CD8-positive, alpha-beta T cell (primary cell): ENCODE measurements at regions of chr14 and their contacts with region 1.

Region 1: DNA sequence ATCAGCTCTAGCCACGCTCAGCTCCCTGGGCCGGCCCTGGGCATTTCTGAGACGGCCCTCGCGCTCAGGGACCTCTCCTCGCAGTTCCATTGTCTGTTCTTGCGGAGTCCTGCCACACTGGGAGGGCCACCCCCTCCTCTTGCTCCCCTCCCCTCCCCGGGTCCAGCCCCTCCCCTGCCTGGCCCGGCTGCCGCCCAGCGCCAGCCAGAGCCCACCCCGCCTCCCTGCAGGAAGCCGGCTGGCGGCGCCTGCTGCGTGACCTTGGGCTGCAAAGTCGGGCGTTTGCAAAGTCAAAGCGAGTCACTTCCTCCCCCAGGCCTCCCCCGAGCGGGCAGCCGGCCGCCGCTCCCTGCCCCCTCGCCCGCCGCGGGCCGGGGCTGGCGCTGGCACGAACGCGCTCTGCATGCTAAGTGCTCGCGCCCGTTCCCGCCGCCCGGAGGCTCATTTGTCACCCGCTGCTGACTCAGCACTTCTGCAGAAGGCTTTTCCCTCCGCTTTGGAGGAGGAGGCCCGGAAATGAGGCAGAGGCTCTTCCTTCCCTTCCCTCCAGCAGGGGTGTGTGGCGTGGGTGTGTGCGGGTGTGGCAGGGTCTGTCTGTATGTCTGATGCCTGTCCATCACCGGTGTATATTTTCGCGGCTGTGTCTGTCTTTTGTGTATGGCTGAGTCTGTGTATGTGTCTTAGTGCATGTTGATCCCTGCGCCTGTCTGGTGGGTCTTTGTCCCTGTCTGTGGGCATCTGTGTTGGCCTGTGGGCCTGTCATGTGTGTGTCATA is 72.0 kb downstream of the IRF2BPL start:
- DNase-seq: peak; percentile 70 to 95 (median 85)
- ATAC-seq: peak; percentile 63
- H3K4me3 ChIP-seq: peak overlapping the region; percentile 62 to 74
- H3K4me3 Mint-ChIP-seq: peak overlapping the region; percentile 84
- H3K27ac ChIP-seq: peak overlapping the region; percentile 93 to 95
- H3K27ac Mint-ChIP-seq: peak overlapping the region; percentile 97
- H3K4me1 ChIP-seq: peaks cover 52% of the 10 kb centered on the region
- H3K4me1 Mint-ChIP-seq: peaks cover 61% of the 10 kb centered on the region
- H3K27me3 ChIP-seq: no peaks in the 10 kb centered on the region
- H3K27me3 Mint-ChIP-seq: no peaks in the 10 kb centered on the region
- CTCF ChIP-seq: no peak

Region 2: GRCh38 chr14:75549169-75549568 is 1407.3 kb before region 1 on chr14:
- CTCF ChIA-PET with region 1: no interaction called
- POLR2A ChIA-PET with region 1: no interaction called
- intact Hi-C with region 1: no loop called
- DNase-seq: peak in 1 of 9 experiments; percentile 28
- ATAC-seq: no peak
- H3K4me3 ChIP-seq: no peak overlapping the region
- H3K4me3 Mint-ChIP-seq: no peak overlapping the region
- H3K27ac ChIP-seq: peak overlapping the region in 1 of 2 experiments; percentile 46
- H3K27ac Mint-ChIP-seq: peak overlapping the region; percentile 27
- H3K4me1 ChIP-seq: peaks cover 6% of the 10 kb centered on the region
- H3K4me1 Mint-ChIP-seq: peaks cover 21% of the 10 kb centered on the region
- H3K27me3 ChIP-seq: no peaks in the 10 kb centered on the region
- H3K27me3 Mint-ChIP-seq: no peaks in the 10 kb centered on the region
- CTCF ChIP-seq: no peak

Region 3: DNA sequence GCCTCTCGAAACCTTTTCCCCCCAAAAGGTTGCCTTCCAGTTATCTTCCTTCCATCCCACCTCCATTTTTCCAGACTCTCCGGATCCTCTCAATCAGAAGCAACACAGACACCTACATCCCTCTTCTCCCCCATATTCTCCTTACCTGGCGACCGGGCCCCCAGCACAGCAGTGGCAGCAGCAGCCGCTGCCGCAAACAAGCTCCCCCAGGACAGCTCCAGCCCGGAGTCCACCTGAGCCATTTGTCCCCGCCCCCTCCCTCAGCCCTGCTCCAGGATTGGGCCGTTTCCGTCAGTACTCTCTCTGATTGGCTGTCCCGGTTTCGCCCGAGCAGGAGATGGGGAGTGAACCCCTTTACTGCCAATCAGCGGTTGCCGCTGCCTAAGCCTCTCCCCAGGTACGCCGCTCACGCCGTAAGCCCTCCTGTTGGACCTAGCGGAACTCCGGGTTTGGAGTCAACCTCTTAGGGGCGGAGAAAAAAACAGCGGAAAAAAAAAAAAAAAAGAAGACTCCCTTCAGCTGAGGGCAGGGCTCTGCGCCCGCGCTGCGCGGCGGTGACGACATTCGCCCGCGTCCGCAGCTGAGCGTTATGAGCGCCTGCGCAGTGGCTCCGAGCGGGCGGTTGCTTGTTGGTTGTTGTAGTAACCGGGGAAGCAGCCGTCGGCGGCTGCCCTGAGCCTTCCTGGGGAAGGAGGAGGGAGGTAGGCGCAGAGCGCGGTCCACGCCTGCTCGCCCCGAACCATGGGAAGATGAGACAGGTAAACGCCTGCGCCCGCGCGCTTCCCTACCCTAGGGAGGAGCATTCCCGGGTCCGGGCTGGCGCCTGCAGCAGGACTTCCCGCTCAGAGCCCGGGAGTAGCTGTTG is 1295.6 kb before region 1 on chr14 and contains the starts of genes ERG28 and TTLL5:
- CTCF ChIA-PET with region 1: no interaction called
- POLR2A ChIA-PET with region 1: no interaction called
- intact Hi-C with region 1: loop called in 1 of 2 experiments (anchors 5 kb)
- DNase-seq: peak; percentile 94 to 99 (median 95)
- ATAC-seq: peak; percentile 93
- H3K4me3 ChIP-seq: peak within 1 kb of the TSS; percentile 86 to 87
- H3K4me3 Mint-ChIP-seq: peak within 1 kb of the TSS; percentile 98
- H3K27ac ChIP-seq: peak within 1 kb of the TSS; percentile 85 to 93
- H3K27ac Mint-ChIP-seq: peak within 1 kb of the TSS; percentile 97
- H3K4me1 ChIP-seq: peaks cover 10% of the 10 kb centered on the region
- H3K4me1 Mint-ChIP-seq: peaks cover 36% of the 10 kb centered on the region
- H3K27me3 ChIP-seq: no peaks in the 10 kb centered on the region
- H3K27me3 Mint-ChIP-seq: no peaks in the 10 kb centered on the region
- CTCF ChIP-seq: no peak
- total RNA-seq, gene ERG28: 6.6 to 6.7 TPM
- total RNA-seq, gene TTLL5: 17.6 to 17.7 TPM

Region 4: DNA sequence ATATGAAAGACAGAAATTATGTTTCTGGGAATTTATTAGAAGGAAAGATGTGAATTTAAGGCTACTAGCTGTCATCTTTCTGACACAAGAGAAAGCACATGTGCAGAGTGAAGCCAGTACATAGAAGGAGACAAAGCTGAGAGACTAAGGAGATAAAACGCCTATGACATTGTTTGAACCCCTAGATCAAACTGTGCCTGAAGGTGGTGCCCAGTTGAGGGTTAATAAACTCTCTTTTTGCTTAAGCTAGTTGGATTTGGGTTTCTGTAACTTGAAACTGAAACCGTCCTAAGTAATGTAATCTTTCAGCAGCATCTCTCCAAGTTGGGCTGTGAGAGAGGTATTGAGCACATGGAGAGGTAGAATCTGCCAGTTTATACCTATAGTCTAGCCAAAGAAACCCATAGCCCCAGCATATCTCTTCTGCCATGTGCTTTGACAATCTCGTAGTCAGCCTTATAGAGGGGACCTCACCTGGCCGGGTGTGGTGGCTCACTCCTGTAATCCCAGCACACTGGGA is 46.1 kb before region 1 on chr14:
- CTCF ChIA-PET with region 1: interaction called, 48 read pairs
- POLR2A ChIA-PET with region 1: no interaction called
- intact Hi-C with region 1: loop called in 1 of 2 experiments (anchors 1 kb)
- DNase-seq: no peak
- ATAC-seq: no peak
- H3K4me3 ChIP-seq: no peak overlapping the region
- H3K4me3 Mint-ChIP-seq: no peak overlapping the region
- H3K27ac ChIP-seq: no peak overlapping the region
- H3K27ac Mint-ChIP-seq: no peak overlapping the region
- H3K4me1 ChIP-seq: peaks cover 25% of the 10 kb centered on the region
- H3K4me1 Mint-ChIP-seq: peaks cover 25% of the 10 kb centered on the region
- H3K27me3 ChIP-seq: no peaks in the 10 kb centered on the region
- H3K27me3 Mint-ChIP-seq: no peaks in the 10 kb centered on the region
- CTCF ChIP-seq: no peak

Region 5: GRCh38 chr14:77028384-77029231 is 72.1 kb after region 1 on chr14 and contains the start of gene IRF2BPL:
- CTCF ChIA-PET with region 1: interaction called, 16 read pairs
- POLR2A ChIA-PET with region 1: interaction called, 62 read pairs
- intact Hi-C with region 1: loop called (anchors 1 to 2 kb)
- DNase-seq: peak; percentile 86 to 98 (median 94)
- ATAC-seq: peak; percentile 68
- H3K4me3 ChIP-seq: peak within 1 kb of the TSS; percentile 66 to 94
- H3K4me3 Mint-ChIP-seq: peak within 1 kb of the TSS; percentile 93
- H3K27ac ChIP-seq: peak within 1 kb of the TSS; percentile 90 to 94
- H3K27ac Mint-ChIP-seq: peak within 1 kb of the TSS; percentile 96
- H3K4me1 ChIP-seq: peaks cover 69% of the 10 kb centered on the region
- H3K4me1 Mint-ChIP-seq: peaks cover 60% of the 10 kb centered on the region
- H3K27me3 ChIP-seq: no peaks in the 10 kb centered on the region
- H3K27me3 Mint-ChIP-seq: no peaks in the 10 kb centered on the region
- CTCF ChIP-seq: peak; percentile 2
- total RNA-seq, gene IRF2BPL: 53.7 to 53.9 TPM

Region 6: GRCh38 chr14:77320238-77320935 is 363.9 kb after region 1 on chr14 and contains the start of gene POMT2:
- CTCF ChIA-PET with region 1: no interaction called
- POLR2A ChIA-PET with region 1: interaction called, 3 read pairs
- intact Hi-C with region 1: loop called in 1 of 2 experiments (anchors 1 kb)
- DNase-seq: peak; percentile 85 to 95 (median 91)
- ATAC-seq: peak; percentile 49
- H3K4me3 ChIP-seq: peak within 1 kb of the TSS; percentile 89 to 100
- H3K4me3 Mint-ChIP-seq: peak within 1 kb of the TSS; percentile 99
- H3K27ac ChIP-seq: peak within 1 kb of the TSS; percentile 90 to 97
- H3K27ac Mint-ChIP-seq: peak within 1 kb of the TSS; percentile 98
- H3K4me1 ChIP-seq: peaks cover 12% of the 10 kb centered on the region
- H3K4me1 Mint-ChIP-seq: peaks cover 20% of the 10 kb centered on the region
- H3K27me3 ChIP-seq: no peaks in the 10 kb centered on the region
- H3K27me3 Mint-ChIP-seq: no peaks in the 10 kb centered on the region
- CTCF ChIP-seq: no peak
- total RNA-seq, gene POMT2: 8.4 to 9.6 TPM